Motor neuron (in vitro differentiated cells): ENCODE measurements at regions of chr3 and their contacts with region 1.

Region 1: GRCh38 chr3:6799264-6799915 is 61.5 kb upstream of the GRM7 start:
- ATAC-seq: peak in 3 of 8 experiments; percentile 48 to 57 (median 48)
- H3K4me3 ChIP-seq: no peak overlapping the region
- H3K27ac ChIP-seq: no peak overlapping the region
- H3K4me1 ChIP-seq: peaks cover 9 to 11% of the 10 kb centered on the region in 2 donors

Region 2: GRCh38 chr3:5426094-5426883 is 1373.1 kb before region 1 on chr3:
- in situ Hi-C with region 1: loop called in 1 of 9 experiments (anchors 25 kb)
- ATAC-seq: peak; percentile 48 to 98 (median 88)
- H3K4me3 ChIP-seq: no peak overlapping the region
- H3K27ac ChIP-seq: no peak overlapping the region
- H3K4me1 ChIP-seq: peaks cover 10 to 15% of the 10 kb centered on the region in 2 donors

Region 3: DNA sequence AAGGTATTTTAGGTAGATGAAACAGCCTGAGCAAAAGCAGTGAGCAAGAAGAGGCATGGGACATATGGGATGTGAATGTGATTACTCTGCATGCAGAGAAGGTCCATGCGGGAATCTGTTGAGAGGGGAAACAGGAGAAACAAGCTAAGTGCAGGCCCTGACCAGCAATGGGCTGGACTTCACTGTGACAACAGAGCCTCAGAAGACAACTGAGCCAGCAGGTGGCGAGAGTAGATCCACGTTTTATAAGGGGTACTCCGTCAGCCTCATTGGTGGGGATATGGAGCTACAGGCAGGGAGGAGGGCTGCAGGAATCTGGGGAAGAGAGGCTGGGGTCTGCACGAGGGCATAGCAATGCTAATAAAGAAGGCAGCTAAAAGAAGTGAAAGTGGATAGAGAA is 1296.3 kb after region 1 on chr3:
- in situ Hi-C with region 1: loop called in 1 of 9 experiments (anchors 25 kb)
- ATAC-seq: peak in 2 of 8 experiments; percentile 45 to 75
- H3K4me3 ChIP-seq: no peak overlapping the region
- H3K27ac ChIP-seq: no peak overlapping the region
- H3K4me1 ChIP-seq: no peaks in the 10 kb centered on the region